ENCODE measurements at regions of chr16 and their contacts with region 1.

Region 1: DNA sequence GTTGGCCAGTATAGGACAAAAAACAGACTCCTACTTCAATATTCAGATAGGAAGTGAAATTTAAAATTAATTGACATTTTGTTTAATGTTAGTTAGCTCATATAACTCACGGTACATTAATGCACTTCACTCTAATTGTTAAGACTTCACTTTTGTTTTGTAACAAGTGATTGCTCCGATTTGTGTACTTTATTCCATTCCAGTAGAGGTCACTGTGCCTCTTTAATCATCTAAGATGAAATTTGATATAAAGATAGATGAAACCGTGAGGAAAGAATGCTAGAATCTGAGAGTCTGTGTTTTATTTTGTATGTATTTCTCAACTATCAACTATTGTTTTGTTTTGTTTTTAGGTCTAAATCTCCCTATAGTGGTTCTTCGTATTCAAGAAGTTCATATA is 29.0 kb downstream of the RBBP6 start:
- DNase-seq: peak; percentile 55
- H3K4me3 ChIP-seq: no peak overlapping the region
- H3K27ac ChIP-seq: no peak overlapping the region
- H3K4me1 ChIP-seq: no peaks in the 10 kb centered on the region
- H3K27me3 ChIP-seq: no peaks in the 10 kb centered on the region
- CTCF ChIP-seq: peak; percentile 57

Region 2: GRCh38 chr16:24694931-24695330 is 126.5 kb after region 1 on chr16:
- CTCF ChIA-PET with region 1: no interaction called
- POLR2A ChIA-PET with region 1: no interaction called
- intact Hi-C with region 1: loop called (anchors 5 kb)
- DNase-seq: no peak
- H3K4me3 ChIP-seq: no peak overlapping the region
- H3K27ac ChIP-seq: no peak overlapping the region
- H3K4me1 ChIP-seq: no peaks in the 10 kb centered on the region
- H3K27me3 ChIP-seq: no peaks in the 10 kb centered on the region
- CTCF ChIP-seq: no peak

Measured in A673 (cell line).